Endothelial cell of umbilical vein (primary cell): ENCODE measurements at regions of chr19 and their contacts with region 1.

Region 1: DNA sequence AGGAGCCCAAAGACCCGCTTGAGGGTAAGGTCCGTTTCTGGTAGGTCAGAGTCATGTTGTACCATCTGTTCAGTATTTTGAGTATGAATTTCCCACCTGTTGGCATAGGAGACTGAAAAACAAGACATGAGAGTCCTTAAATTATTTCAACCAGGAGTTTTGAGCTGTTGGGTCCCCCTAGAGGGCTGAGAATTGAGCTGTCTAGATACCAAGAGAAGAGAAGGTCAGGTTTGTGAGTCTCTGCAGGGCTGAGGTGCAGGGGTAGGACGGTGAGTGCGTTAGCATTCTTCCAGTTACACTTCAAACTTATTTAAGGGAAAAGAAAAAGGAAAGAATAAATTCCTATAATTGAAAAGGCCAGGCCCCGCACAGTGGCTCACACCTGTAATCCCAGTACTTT is 5.0 kb downstream of the CBLC start:
- DNase-seq: no peak
- H3K4me3 ChIP-seq: no peak overlapping the region
- H3K27ac ChIP-seq: no peak overlapping the region
- H3K4me1 ChIP-seq: no peaks in the 10 kb centered on the region
- H3K27me3 ChIP-seq: no peaks in the 10 kb centered on the region
- CTCF ChIP-seq: no peak
- POLR2A ChIP-seq: no peak

Region 2: DNA sequence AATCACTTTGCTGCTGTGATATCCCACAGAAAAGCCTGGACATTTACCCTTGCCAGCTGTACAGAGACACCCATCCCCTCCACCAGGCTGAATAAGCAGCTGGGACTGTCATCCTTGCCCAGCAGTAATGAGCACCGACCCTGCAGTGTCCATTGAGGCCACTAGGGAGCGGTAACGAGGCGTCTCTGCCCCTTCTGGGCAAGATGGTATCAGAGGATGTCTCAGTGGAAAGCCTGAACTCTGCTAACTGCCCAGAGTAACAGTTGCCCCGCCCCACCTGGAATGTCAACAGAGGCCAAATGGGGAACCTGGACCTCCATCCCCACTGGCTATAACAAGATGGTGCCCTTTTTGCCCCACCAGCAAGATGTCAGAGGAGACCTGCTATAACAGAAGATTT is 230.4 kb before region 1 on chr19:
- CTCF ChIA-PET with region 1: no interaction called
- POLR2A ChIA-PET with region 1: no interaction called
- dilution Hi-C with region 1: no loop called
- intact Hi-C with region 1: no loop called
- DNase-seq: peak; percentile 45
- H3K4me3 ChIP-seq: no peak overlapping the region
- H3K27ac ChIP-seq: no peak overlapping the region
- H3K4me1 ChIP-seq: no peaks in the 10 kb centered on the region
- H3K27me3 ChIP-seq: peaks cover 0 to 2% of the 10 kb centered on the region in 2 experiments
- CTCF ChIP-seq: peak; percentile 71 to 75
- POLR2A ChIP-seq: no peak

Region 3: DNA sequence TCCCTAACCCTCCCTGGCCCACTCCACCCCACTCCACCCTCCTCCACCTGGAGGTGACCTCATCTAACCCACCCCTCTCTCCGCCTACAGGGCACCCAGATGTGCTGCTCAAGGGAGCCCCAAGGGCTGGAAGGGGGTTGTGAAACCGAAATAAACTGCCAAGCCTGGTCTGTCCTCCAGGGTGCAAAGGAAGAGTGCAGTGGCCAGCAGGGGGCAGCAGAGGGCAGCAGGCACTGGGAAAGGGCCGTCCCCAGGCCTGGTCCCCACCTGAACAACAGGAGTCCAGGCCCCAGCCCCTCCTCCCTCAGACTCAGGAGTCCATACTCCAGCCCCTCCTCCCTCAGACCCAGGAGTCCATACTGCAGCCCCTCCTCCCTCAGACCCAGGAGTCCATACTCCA is 17.7 kb after region 1 on chr19:
- CTCF ChIA-PET with region 1: interaction called, 45 read pairs
- POLR2A ChIA-PET with region 1: no interaction called
- dilution Hi-C with region 1: no loop called
- intact Hi-C with region 1: loop called (anchors 1 kb)
- DNase-seq: peak; percentile 68
- H3K4me3 ChIP-seq: no peak overlapping the region
- H3K27ac ChIP-seq: no peak overlapping the region
- H3K4me1 ChIP-seq: peaks cover 14% of the 10 kb centered on the region
- H3K27me3 ChIP-seq: no peaks in the 10 kb centered on the region
- CTCF ChIP-seq: peak; percentile 91 to 98
- POLR2A ChIP-seq: no peak

Region 4: GRCh38 chr19:44808463-44809371 is 26.0 kb after region 1 on chr19 and contains the start of gene BCAM:
- CTCF ChIA-PET with region 1: interaction called, 57 read pairs
- POLR2A ChIA-PET with region 1: no interaction called
- dilution Hi-C with region 1: no loop called
- intact Hi-C with region 1: no loop called
- DNase-seq: peak; percentile 49
- H3K4me3 ChIP-seq: peak within 1 kb of the TSS; percentile 60 to 66 (median 64)
- H3K27ac ChIP-seq: no peak within 1 kb of the TSS
- H3K4me1 ChIP-seq: peaks cover 16% of the 10 kb centered on the region
- H3K27me3 ChIP-seq: no peaks in the 10 kb centered on the region
- CTCF ChIP-seq: no peak
- POLR2A ChIP-seq: peak; percentile 68
- total RNA-seq, gene BCAM: 28.5 and 29.0 TPM in 2 replicates

Region 5: GRCh38 chr19:44820648-44821609 is 38.2 kb after region 1 on chr19:
- CTCF ChIA-PET with region 1: interaction called, 12 read pairs
- POLR2A ChIA-PET with region 1: interaction called, 3 read pairs
- dilution Hi-C with region 1: no loop called
- intact Hi-C with region 1: no loop called
- DNase-seq: peak; percentile 50
- H3K4me3 ChIP-seq: peak overlapping the region in 1 of 3 experiments; percentile 2
- H3K27ac ChIP-seq: no peak overlapping the region
- H3K4me1 ChIP-seq: peaks cover 3% of the 10 kb centered on the region
- H3K27me3 ChIP-seq: no peaks in the 10 kb centered on the region
- CTCF ChIP-seq: no peak
- POLR2A ChIP-seq: no peak

Region 6: DNA sequence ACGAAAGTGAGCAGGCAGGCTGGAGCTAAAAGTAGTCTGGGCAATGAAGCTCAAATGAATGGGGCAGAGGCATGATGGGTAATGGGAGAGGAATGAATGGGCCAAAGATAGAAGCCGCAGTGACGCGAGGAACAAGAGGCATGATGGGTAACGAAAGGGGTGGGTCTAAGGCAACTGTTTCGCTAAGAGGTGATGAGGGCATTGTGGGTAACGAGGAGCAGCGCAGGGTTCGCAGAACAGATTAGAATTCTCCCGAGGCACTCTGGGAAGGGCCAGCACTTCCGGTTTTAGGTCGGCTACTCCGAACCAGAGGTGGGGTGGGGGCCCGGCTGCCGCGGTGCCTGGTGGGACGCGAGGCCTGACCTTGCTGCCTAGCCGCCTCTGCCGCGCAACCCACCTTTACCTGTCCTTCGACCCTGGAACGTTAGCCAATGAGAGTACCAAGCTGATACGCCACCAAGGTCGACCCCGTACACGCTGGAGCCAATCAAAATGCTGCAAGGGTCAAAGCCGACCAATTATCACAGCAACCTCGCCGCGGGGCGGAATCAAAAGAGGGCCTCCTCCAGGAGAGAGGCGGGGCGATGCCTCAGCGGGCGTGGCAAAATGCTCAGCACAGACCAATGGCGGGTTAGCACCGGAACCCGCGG is 107.8 kb after region 1 on chr19:
- CTCF ChIA-PET with region 1: interaction called, 3 read pairs
- POLR2A ChIA-PET with region 1: no interaction called
- dilution Hi-C with region 1: no loop called
- intact Hi-C with region 1: loop called (anchors 5 kb)
- DNase-seq: peak; percentile 100
- H3K4me3 ChIP-seq: peak overlapping the region in 2 of 3 experiments; percentile 44 to 61
- H3K27ac ChIP-seq: peak overlapping the region; percentile 65
- H3K4me1 ChIP-seq: peaks cover 16% of the 10 kb centered on the region
- H3K27me3 ChIP-seq: no peaks in the 10 kb centered on the region
- CTCF ChIP-seq: no peak
- POLR2A ChIP-seq: peak; percentile 91